ENCODE measurements at regions of chr9 and their contacts with region 1.

Region 1: DNA sequence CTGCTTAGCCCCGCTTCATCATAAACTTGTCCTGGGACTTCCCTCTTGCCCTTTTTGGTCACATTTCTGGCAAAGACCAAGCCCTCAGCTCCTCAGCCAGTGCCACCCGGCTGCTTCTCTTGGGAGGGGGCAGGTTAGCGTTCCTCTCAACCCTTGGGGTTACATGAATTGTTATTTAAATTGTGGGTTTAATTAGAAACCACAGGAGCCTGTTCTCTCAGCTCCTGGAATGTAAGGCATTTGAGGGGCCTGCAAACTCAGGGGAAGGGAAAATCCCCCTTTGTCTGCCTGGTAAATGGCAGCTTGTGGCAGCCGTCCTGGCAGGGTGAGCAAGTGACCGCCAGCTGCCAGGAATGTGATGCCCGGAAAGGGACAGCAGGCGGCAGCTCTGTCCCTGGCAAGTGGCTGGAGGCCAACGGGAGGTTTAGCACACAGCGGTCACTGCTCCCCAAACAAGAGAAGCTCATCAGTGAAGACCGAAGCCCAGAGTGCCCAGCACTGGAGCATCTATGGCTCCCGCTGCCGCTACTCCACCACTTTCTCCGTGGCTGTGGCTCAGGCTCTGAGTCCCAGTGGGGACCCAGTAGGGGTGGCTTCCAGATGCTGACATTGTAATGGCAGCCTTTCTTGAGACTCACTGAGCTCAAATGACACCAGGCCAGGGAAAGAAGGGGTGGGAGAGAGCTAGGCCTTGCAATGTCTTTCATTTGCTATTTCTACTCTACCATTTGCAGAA is 51.7 kb downstream of the SHB start:
- DNase-seq: peak; percentile 52
- H3K4me3 ChIP-seq: no peak overlapping the region
- H3K27ac ChIP-seq: peak overlapping the region; percentile 44
- H3K4me1 ChIP-seq: peaks cover 54% of the 10 kb centered on the region
- H3K27me3 ChIP-seq: no peaks in the 10 kb centered on the region
- CTCF ChIP-seq: peak; percentile 20 to 68

Region 2: GRCh38 chr9:37920471-37921167 is 96.7 kb before region 1 on chr9:
- CTCF ChIA-PET with region 1: interaction called, 3 read pairs
- dilution Hi-C with region 1: no loop called
- in situ Hi-C with region 1: no loop called
- intact Hi-C with region 1: loop called (anchors 1 kb)
- DNase-seq: no peak
- H3K4me3 ChIP-seq: no peak overlapping the region
- H3K27ac ChIP-seq: no peak overlapping the region
- H3K4me1 ChIP-seq: peaks cover 29% of the 10 kb centered on the region
- H3K27me3 ChIP-seq: no peaks in the 10 kb centered on the region
- CTCF ChIP-seq: no peak

Region 3: DNA sequence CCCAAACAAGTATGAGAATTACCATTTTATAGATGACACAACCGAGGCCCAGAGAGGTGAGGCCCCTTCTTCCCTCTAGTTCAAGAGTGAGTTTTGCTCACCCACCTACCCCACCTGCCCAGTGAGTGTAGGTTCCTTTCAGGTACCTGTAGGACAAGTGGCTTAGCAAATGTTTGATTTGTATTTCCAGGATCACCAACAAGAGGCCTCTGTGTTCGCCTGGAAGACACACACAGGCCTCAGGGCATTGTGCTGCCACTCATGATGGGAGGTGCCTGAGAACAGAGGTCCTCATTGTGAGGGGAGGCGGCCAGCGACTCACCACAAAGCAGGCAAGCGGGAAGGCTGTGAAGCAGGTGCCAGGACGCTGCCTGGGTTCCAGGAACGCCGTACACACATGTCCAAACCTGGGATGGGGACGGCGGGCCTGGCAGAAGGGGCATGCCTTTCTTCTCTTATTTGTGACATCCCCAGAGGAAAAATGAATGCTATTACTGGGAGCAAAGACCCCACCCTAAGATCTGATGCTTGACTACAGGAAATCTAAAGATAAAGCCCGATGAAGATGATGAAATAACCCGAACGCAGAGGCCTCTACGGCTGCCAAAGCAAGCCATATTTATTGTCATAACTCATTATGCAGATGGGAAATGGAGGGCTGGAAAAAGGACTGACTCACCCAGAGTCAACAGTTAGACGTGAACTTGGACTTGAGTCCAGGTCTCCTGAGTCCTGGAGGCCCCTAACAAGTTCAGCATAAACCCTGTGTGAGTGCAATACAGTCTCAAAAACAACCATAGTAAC is 53.2 kb before region 1 on chr9:
- CTCF ChIA-PET with region 1: interaction called, 3 read pairs
- dilution Hi-C with region 1: no loop called
- in situ Hi-C with region 1: no loop called
- intact Hi-C with region 1: loop called (anchors 5 kb)
- DNase-seq: peak; percentile 91
- H3K4me3 ChIP-seq: no peak overlapping the region
- H3K27ac ChIP-seq: peak overlapping the region; percentile 77
- H3K4me1 ChIP-seq: peaks cover 62% of the 10 kb centered on the region
- H3K27me3 ChIP-seq: no peaks in the 10 kb centered on the region
- CTCF ChIP-seq: no peak

Region 4: GRCh38 chr9:38079461-38080031 is 62.2 kb after region 1 on chr9:
- CTCF ChIA-PET with region 1: no interaction called
- dilution Hi-C with region 1: no loop called
- in situ Hi-C with region 1: no loop called
- intact Hi-C with region 1: no loop called
- DNase-seq: no peak
- H3K4me3 ChIP-seq: no peak overlapping the region
- H3K27ac ChIP-seq: no peak overlapping the region
- H3K4me1 ChIP-seq: peaks cover 3% of the 10 kb centered on the region
- H3K27me3 ChIP-seq: no peaks in the 10 kb centered on the region
- CTCF ChIP-seq: no peak

Region 5: DNA sequence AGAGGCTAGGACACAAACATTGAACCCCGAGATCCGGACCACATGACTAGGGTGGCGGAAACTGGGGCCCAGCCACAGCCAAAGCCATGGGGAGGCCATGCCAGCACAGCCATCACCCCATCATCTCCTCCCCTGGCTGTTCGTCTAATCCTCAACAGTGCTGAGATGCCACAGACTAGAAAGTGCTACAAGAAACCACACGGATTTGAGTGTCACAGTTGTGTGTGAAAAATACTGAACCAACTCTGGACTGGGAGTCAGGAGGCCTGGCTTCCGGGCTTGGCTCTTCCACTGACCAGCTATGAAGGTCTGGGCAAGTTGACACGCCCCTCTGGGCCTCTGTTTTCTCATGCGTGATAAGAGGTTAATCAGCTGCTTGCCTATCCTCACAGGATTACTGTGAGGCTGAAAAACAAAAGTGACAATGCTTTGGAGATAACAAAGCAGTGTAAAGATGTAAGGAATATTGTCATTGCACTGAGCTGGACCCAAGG is 90.5 kb after region 1 on chr9:
- CTCF ChIA-PET with region 1: no interaction called
- dilution Hi-C with region 1: no loop called
- in situ Hi-C with region 1: no loop called
- intact Hi-C with region 1: no loop called
- DNase-seq: no peak
- H3K4me3 ChIP-seq: no peak overlapping the region
- H3K27ac ChIP-seq: no peak overlapping the region
- H3K4me1 ChIP-seq: no peaks in the 10 kb centered on the region
- H3K27me3 ChIP-seq: peaks cover 3% of the 10 kb centered on the region
- CTCF ChIP-seq: no peak

Region 6: DNA sequence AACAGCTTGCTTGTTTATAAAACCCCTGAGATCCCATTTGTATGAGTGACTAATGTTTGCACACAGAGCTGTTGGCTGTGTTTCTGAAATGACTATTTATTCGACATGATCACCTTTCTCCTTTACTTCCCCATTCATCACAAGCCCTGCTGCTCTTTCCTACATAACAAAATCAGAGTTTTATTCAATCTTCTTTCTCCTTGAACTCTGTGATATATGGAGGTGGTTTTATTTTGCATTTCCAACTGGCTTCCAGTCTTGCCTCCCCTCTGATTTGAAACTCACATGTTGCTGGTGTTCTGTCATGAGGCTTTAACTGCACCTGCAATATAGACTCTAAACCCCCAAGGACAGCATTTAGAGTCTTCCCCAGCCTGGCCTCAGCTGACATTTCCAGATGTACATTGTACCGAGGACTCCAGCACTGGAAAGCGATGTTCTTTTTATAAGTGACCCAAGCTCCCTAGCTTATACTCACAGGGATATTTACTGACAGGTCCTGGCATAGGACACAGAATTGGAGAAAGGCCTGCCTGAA is 102.5 kb after region 1 on chr9:
- CTCF ChIA-PET with region 1: no interaction called
- dilution Hi-C with region 1: no loop called
- in situ Hi-C with region 1: no loop called
- intact Hi-C with region 1: no loop called
- DNase-seq: no peak
- H3K4me3 ChIP-seq: no peak overlapping the region
- H3K27ac ChIP-seq: no peak overlapping the region
- H3K4me1 ChIP-seq: no peaks in the 10 kb centered on the region
- H3K27me3 ChIP-seq: no peaks in the 10 kb centered on the region
- CTCF ChIP-seq: no peak

Region 7: DNA sequence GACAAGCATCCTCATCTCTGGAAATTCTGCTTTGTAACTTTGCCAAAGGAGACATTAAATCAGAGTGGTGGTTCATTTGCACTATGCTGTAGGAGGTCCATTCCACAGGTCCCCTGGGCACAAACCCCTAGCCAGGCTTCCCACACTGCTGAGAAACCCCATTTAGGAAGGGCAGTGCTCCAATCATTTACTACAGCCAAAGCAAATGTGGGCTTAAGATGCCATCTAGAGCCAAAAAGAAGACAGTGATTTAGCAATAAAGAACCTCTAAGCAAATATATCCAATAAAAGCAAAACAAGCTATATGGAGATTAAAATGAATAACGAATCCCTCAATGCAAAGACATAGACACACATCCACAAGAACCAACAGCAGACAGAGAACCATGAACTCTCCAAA is 246.2 kb after region 1 on chr9:
- CTCF ChIA-PET with region 1: no interaction called
- dilution Hi-C with region 1: no loop called
- in situ Hi-C with region 1: no loop called
- intact Hi-C with region 1: loop called (anchors 2 kb)
- DNase-seq: peak; percentile 31
- H3K4me3 ChIP-seq: no peak overlapping the region
- H3K27ac ChIP-seq: no peak overlapping the region
- H3K4me1 ChIP-seq: no peaks in the 10 kb centered on the region
- H3K27me3 ChIP-seq: no peaks in the 10 kb centered on the region
- CTCF ChIP-seq: peak; percentile 41 to 61

Measured in mammary epithelial cell (primary cell).